MCF 10A (cell line): ENCODE measurements at regions of chr3 and their contacts with region 1.

Region 1: DNA sequence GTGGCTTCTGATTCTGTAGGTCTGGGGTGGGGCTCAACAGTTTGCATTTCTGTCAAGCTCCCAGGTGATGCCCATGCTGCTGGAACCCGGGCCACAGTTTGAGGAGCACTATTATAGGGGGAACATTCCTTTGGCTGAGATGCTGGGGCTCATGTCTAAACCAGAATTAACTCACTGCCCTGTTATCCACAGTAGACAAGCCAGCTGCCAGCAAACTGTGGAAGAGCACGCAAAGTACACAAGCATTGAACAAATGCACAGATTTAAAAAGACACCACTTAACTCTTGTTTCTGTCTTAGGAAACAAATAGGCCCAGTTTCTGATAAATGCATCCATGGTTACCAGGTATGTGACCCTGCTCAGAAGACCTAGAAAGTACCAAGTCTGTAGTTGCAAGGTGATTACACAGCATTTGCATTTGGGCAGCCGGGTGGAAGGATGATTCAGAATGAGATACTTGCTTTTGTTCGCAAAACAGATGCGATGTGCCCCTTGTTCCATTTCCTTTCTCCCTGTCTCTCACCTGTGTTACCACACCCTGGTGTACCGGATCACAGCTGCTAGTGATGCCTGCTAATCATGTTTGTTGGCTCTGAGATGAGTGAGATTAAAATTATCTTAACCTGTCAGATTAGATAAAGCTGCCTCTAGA is 12.4 kb downstream of the GYG1 start:
- DNase-seq: no peak
- H3K4me3 Mint-ChIP-seq: no peak overlapping the region
- H3K27ac Mint-ChIP-seq: no peak overlapping the region
- H3K4me1 Mint-ChIP-seq: peaks cover 6% of the 10 kb centered on the region
- H3K27me3 Mint-ChIP-seq: no peaks in the 10 kb centered on the region
- CTCF ChIP-seq: no peak

Region 2: GRCh38 chr3:148991194-148992026 is 12.4 kb before region 1 on chr3 and contains the start of gene GYG1:
- CTCF ChIA-PET with region 1: interaction called, 7 read pairs
- POLR2A ChIA-PET with region 1: interaction called, 10 read pairs
- intact Hi-C with region 1: no loop called
- DNase-seq: peak; percentile 80
- H3K4me3 Mint-ChIP-seq: peak within 1 kb of the TSS; percentile 72
- H3K27ac Mint-ChIP-seq: no peak within 1 kb of the TSS
- H3K4me1 Mint-ChIP-seq: peaks cover 7% of the 10 kb centered on the region
- H3K27me3 Mint-ChIP-seq: peaks cover 3% of the 10 kb centered on the region
- CTCF ChIP-seq: no peak
- total RNA-seq, gene GYG1: 22.3 and 25.4 TPM in 2 replicates